Transverse colon (tissue), 4 donors: ENCODE measurements at regions of chr11 and their contacts with region 1.

Region 1: DNA sequence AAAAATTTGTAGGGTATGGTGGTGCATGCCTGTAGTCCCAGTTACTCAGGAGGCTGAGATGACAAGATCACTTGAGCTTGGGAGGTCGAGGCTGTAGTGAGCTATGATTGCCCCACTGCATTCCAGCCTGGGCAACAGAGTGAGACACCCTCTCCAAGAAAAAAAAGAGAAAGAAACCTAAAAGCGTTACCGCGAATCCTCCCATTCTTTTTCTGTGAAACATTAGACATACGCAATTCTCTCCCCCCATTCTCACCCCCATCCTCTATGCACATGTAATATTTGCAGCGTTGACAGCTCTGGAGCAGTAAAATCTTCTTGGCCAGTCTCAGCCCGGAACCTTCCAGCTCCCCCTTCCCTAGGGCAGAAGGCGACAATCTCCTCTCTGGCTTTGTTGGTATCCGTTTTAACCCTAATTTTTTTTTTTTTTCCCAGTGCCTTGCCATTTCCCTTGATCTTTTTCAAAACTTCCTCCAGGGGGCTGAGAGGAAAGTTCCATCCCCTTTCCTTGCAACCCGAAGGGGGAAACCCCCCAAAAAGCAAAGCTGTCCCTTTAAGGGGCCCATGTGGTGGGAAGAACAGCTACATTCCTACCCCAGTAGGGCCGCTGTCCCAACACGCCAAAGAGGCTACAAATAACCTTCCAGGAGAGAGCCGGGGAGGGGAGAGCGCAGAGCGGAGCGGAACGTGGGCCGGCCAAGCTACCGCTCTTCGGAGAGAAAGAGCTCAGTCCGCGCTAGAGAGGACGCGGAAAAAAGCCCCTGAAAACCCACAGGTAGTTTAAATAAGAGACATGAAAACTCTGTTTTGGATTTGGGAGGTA is 1.9 kb downstream of the LRP4 start:
- DNase-seq: peak; percentile 62
- H3K4me3 ChIP-seq: peak overlapping the region; percentile 63 to 73 (median 70)
- H3K27ac ChIP-seq: peak overlapping the region; percentile 66 to 82 (median 76)
- H3K4me1 ChIP-seq: peaks cover 7 to 64% (median 31%) of the 10 kb centered on the region in 4 donors
- H3K27me3 ChIP-seq: peaks cover 12% of the 10 kb centered on the region
- CTCF ChIP-seq: peak in 1 of 5 experiments; percentile 40
- EP300 ChIP-seq: no peak
- POLR2A ChIP-seq: no peak

Region 2: DNA sequence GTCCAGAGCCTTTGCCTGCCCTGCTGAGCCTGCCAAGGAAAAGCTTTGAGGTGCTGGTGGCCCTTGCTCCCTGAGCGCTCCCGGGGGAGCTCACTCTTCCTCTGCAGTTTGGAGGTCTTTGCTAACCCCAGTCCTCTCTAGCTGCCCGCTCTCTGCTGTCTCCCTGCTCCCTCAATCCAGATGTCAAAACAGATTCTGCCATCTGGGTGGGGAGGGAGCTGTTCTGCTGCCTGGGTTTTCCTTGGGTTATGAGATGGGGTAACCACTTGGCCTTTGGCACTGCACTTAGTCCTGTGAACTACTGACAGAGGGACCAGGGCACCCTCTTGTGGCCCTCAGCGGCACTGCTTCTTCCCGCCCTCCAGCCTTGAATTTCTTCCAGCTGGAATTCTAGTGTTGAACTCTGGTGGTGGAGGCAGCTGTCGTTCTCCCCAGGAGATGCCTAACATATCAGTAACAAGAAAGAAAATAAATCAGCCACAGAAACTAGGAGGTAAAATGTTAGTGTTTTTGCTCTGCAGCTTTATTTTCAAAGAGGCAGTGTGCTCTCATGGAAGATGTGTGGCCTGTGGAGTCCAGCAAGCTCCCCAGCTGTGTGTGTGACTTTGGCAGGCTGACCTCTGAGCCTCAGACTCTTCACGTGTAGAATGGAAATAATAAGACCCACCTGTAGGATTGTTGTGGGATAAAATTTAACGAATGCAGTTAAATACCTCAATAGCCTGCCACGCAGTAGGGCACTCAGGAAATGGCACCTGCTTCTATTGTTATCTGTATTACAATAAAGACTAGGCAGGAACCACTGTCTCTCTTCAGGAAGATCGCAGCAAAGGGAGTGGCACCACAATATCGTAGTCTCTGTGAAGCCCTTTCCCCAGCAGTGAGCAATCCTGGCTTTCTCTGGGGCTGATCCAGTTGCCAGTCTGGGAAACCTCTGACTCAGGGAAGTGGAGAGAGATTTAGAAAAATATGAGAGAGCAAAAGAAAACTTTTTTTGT is 236.8 kb after region 1 on chr11:
- in situ Hi-C with region 1: loop called in 1 of 4 experiments (anchors 10 kb)
- intact Hi-C with region 1: no loop called
- DNase-seq: peak; percentile 87
- H3K4me3 ChIP-seq: no peak overlapping the region
- H3K27ac ChIP-seq: peak overlapping the region in 3 of 4 donors; percentile 34 to 56 (median 52)
- H3K4me1 ChIP-seq: peaks cover 3 to 37% (median 22%) of the 10 kb centered on the region in 4 donors
- H3K27me3 ChIP-seq: no peaks in the 10 kb centered on the region
- CTCF ChIP-seq: peak; percentile 92 to 98 (median 96)
- EP300 ChIP-seq: no peak
- POLR2A ChIP-seq: no peak